Activated CD8-positive, alpha-beta memory T cell treated with anti-CD3 and anti-CD28 coated beads, Interleukin-2, amount 10 ng/mL, durations not matched to agents 7 days and 5 days (primary cell): ENCODE measurements at regions of chr4 and their contacts with region 1.

Region 1: DNA sequence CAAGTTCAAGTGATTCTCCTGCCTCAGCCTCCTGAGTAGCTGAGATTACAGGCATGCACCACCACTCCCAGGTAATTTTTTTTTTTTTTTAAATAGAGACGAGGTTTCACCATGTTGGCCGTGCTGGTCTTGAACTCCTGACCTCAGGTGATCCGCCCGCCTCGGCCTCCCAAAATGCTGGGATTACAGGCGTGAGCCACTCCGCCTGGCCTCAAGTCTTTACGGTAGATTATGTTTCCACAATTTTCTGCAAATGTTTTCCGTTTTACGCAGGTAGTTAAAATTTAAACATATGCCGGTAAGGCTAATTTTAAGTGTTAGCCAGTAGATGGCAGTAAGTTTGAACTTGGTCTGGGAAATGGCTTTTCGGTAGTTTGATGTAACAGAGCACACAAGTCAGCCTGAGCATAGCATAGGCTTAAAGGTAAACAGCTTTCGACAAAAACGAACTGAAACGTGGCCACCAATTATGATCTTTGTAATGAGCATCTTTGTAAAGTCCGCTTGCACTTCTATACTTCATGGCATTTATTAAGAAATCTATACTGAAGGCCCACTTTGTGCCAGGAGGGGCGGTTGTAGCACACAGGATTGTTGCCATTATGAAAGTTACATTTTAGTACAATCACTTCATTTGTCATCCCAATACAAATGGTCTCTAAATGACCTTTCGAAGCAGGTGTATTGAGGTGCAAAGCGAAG is 31.1 kb downstream of the CCKAR start:
- DNase-seq: peak; percentile 30
- ATAC-seq: peak; percentile 51
- H3K4me3 Mint-ChIP-seq: no peak overlapping the region
- H3K27ac Mint-ChIP-seq: no peak overlapping the region
- H3K4me1 Mint-ChIP-seq: peaks cover 12% of the 10 kb centered on the region
- H3K27me3 Mint-ChIP-seq: peaks cover 2% of the 10 kb centered on the region

Region 2: DNA sequence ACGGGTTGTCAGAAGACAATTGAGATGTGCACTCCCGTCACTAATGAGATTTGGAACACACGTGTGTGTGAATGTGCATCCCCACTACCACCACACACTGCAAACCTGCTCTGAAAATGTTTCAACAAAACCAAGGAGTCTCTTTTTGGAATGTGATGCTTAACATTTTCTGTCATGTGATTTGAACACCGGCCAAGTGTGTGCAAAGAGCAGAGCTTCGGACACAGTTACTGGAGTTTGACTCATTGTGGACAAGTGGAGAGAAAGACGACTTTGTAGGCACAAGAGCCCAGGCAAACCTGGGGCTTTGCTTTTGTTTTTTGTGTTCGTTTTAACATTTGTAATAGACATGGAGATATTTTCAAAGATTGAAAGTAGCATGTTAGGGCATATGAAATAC is 18.1 kb before region 1 on chr4:
- CTCF ChIA-PET with region 1: no interaction called
- DNase-seq: no peak
- ATAC-seq: no peak
- H3K4me3 Mint-ChIP-seq: no peak overlapping the region
- H3K27ac Mint-ChIP-seq: no peak overlapping the region
- H3K4me1 Mint-ChIP-seq: no peaks in the 10 kb centered on the region
- H3K27me3 Mint-ChIP-seq: peaks cover 2% of the 10 kb centered on the region

Region 3: DNA sequence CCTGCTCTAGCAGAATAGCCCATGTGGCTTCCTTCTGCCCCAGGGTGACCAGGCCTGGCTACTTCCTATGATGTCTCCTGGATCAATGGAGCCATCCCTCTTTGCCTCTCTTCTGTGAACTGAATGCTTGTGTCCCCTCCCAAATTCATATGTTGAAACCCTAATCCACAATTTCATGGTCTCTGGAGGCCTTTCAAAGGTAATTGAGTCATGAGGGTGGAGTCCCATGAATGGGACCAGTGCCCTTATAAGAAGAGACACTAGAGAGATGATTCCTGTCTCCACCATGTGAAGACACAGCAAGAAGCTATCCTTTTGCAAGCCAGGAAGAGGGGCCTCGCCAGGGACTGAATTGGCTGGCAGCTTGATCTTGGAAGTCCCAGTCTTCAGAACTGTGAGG is 12.7 kb after region 1 on chr4:
- CTCF ChIA-PET with region 1: no interaction called
- DNase-seq: no peak
- ATAC-seq: no peak
- H3K4me3 Mint-ChIP-seq: no peak overlapping the region
- H3K27ac Mint-ChIP-seq: no peak overlapping the region
- H3K4me1 Mint-ChIP-seq: no peaks in the 10 kb centered on the region
- H3K27me3 Mint-ChIP-seq: peaks cover 10% of the 10 kb centered on the region

Region 4: DNA sequence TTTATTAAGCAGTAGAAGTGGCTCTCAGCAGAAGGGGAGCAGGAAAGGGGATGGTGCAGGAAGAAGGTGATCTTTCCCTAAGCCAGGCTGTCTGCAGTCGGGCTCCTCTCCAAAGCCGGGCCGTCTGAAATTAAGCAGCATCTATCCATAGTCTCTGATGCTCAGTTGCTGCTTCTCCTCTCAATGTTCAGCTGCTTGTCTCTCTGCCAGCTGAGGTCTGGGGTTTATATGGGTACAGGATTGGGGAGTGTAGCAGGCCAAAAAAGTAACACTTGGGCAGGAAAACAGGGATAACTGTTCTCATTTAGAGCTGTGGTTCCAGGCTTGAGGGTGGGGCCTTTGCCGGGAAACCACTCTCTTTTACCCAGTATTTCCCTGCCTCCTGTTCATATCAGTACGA is 70.3 kb after region 1 on chr4:
- CTCF ChIA-PET with region 1: no interaction called
- DNase-seq: no peak
- ATAC-seq: no peak
- H3K4me3 Mint-ChIP-seq: no peak overlapping the region
- H3K27ac Mint-ChIP-seq: no peak overlapping the region
- H3K4me1 Mint-ChIP-seq: no peaks in the 10 kb centered on the region
- H3K27me3 Mint-ChIP-seq: peaks cover 3% of the 10 kb centered on the region

Region 5: GRCh38 chr4:26709246-26709645 is 250.0 kb after region 1 on chr4:
- CTCF ChIA-PET with region 1: no interaction called
- DNase-seq: no peak
- ATAC-seq: no peak
- H3K4me3 Mint-ChIP-seq: no peak overlapping the region
- H3K27ac Mint-ChIP-seq: no peak overlapping the region
- H3K4me1 Mint-ChIP-seq: no peaks in the 10 kb centered on the region
- H3K27me3 Mint-ChIP-seq: no peaks in the 10 kb centered on the region

Region 6: GRCh38 chr4:27005501-27005900 is 546.3 kb after region 1 on chr4:
- CTCF ChIA-PET with region 1: interaction called, 13 read pairs
- DNase-seq: no peak
- ATAC-seq: no peak
- H3K4me3 Mint-ChIP-seq: no peak overlapping the region
- H3K27ac Mint-ChIP-seq: no peak overlapping the region
- H3K4me1 Mint-ChIP-seq: peaks cover 40% of the 10 kb centered on the region
- H3K27me3 Mint-ChIP-seq: no peaks in the 10 kb centered on the region